A673 (cell line): ENCODE measurements at regions of chr3 and their contacts with region 1.

Region 1: GRCh38 chr3:190205739-190206138 is 85.0 kb upstream of the P3H2 start:
- DNase-seq: no peak
- H3K4me3 ChIP-seq: no peak overlapping the region
- H3K27ac ChIP-seq: no peak overlapping the region
- H3K4me1 ChIP-seq: no peaks in the 10 kb centered on the region
- H3K27me3 ChIP-seq: no peaks in the 10 kb centered on the region
- CTCF ChIP-seq: no peak

Region 2: DNA sequence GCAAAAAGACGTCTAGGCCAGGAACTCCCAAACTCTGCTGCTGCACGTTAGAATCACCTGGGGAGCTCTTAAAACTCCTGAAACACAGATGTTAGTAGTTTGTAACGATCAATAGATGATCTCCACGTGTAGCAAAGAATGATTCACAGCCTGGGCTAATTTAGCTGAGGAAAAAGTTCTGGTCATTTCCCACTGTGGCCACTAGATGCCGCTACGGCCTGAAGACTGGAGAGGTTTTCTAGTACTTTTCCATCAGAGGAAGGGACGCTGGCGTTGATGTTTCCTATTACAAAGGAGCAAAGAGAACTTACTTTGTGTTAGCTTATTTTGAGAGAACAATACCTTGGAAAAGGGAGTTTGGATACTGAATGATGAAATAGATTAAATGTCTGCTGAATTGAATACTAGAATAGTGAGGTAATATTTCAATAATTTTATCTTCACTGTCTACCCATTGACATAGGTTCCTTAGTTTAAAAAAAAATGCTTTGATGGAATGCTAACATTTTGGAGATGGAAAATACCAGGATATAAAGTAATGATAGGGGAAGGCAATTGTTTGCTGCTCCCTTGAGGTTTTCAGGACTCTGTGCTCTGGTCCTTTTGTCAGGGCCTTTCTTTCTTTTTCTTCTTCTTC is 244.1 kb before region 1 on chr3:
- CTCF ChIA-PET with region 1: interaction called, 13 read pairs
- POLR2A ChIA-PET with region 1: interaction called, 35 read pairs
- intact Hi-C with region 1: loop called (anchors 2 kb)
- DNase-seq: peak; percentile 94
- H3K4me3 ChIP-seq: no peak overlapping the region
- H3K27ac ChIP-seq: no peak overlapping the region
- H3K4me1 ChIP-seq: peaks cover 29% of the 10 kb centered on the region
- H3K27me3 ChIP-seq: no peaks in the 10 kb centered on the region
- CTCF ChIP-seq: peak; percentile 93

Region 3: GRCh38 chr3:190017521-190018288 is 188.0 kb before region 1 on chr3:
- CTCF ChIA-PET with region 1: no interaction called
- POLR2A ChIA-PET with region 1: no interaction called
- intact Hi-C with region 1: loop called (anchors 5 kb)
- DNase-seq: peak; percentile 70
- H3K4me3 ChIP-seq: no peak overlapping the region
- H3K27ac ChIP-seq: no peak overlapping the region
- H3K4me1 ChIP-seq: peaks cover 28% of the 10 kb centered on the region
- H3K27me3 ChIP-seq: no peaks in the 10 kb centered on the region
- CTCF ChIP-seq: peak; percentile 65

Region 4: DNA sequence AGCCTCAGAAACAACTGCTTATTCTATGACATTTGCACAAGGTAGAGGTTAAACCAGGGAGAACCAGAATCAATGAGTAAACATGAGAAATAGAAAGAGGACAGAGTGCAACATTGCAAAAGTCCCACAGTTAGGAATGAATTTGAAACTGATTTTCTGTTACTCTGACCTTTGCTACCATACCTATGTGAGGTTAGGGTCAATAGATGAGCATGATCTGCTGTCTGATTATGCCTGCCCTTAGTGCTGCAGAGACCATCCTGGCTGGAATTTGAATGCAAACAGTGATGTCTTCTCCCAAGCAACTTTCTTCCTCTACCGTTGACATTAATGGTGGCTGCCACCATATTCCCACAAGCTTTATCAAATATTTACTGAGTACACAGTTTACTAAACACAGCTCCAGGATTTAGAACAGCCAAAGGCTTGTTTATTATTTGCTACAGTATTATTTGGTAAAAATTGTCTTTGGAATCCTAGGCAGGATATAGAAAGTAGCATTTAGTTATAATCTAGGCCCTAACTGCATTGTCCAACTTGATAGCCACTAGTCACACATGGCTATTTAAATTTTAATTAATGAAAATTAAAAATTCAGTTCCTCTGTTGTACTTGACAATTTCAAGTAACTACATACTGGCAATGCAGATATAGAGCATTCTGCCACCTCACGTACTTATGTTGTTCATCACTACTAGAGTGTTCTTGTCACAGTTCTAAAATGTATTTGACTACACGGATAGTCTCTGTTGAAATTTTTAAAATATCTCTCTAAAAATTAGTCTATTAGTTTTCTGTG is 125.4 kb after region 1 on chr3:
- CTCF ChIA-PET with region 1: no interaction called
- POLR2A ChIA-PET with region 1: no interaction called
- intact Hi-C with region 1: no loop called
- DNase-seq: no peak
- H3K4me3 ChIP-seq: no peak overlapping the region
- H3K27ac ChIP-seq: no peak overlapping the region
- H3K4me1 ChIP-seq: peaks cover 26% of the 10 kb centered on the region
- H3K27me3 ChIP-seq: no peaks in the 10 kb centered on the region
- CTCF ChIP-seq: no peak